Mammary epithelial cell (primary cell): ENCODE measurements at regions of chr3 and their contacts with region 1.

Region 1: DNA sequence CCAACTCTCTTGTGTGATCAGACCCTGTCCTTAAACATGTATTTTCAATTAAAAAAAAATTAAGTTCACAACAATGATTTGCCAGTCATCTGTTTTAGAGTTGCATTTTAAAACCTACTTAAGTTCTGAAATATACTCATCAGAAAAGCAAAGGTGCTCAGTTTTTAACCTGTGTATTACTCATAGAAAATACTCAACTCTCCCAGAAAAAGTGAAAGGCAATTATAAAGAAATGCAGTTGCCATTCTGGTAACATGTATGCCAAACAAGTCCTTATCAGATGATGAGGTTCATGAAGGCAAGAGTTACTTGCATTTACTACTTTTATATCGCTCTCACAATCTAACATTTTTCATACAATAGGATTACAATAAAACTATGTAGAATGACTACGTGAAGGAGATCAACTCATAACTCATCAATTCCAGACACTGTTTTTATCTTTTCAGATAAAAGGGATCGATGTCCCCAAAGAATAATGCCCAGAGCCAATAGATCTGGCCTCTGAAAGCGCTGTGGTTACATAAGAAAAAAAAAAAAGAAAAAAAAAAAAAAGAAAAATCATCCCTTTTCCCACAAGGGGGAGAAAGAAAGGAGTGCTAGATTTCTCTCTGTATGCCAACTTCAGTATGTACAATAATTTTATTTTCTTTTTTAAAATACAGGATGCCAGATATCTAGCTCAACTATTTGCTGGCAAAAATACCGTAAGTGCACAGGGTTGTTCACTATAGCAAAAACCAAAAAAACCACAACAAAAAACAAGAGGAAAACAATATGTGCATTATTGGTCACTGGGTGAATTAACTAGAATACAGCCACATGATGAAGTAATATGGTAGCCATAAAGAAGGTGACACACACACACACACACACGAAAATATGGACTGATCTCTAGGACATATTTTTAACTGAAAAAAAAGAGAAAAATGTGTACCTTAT is 137.4 kb downstream of the NR1I2 start:
- DNase-seq: no peak
- H3K4me3 ChIP-seq: no peak overlapping the region
- H3K27ac ChIP-seq: no peak overlapping the region
- H3K4me1 ChIP-seq: no peaks in the 10 kb centered on the region
- H3K27me3 ChIP-seq: no peaks in the 10 kb centered on the region
- CTCF ChIP-seq: peak in 1 of 2 donors; percentile 14

Region 2: DNA sequence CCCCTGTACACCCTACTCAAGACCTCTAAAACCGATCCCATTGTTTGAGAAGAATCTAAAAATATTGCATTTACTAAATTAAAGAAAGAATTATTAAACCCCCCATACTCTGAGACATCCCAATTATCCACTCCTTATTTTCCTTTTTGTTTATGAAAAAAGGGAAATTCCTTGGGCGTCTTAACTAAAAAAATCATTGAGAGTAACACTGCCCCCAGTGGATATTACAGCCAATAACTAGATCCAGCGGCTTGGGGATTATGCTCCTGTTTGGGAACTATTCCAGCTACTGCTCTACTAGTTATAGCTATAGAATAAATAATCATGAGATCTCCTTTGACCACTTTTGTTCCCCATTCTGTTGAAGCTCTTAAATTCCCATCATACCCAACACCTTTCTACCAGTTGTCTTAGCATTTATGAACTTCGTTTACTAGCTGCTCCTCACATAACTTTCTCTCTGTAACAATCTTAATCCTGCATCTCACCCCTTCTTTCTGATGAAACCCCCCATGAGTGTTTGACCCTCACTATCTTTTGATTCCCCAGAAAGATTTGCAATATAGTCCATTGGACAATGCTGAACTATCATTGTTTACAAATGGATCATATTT is 229.1 kb before region 1 on chr3:
- CTCF ChIA-PET with region 1: no interaction called
- dilution Hi-C with region 1: no loop called
- in situ Hi-C with region 1: no loop called
- intact Hi-C with region 1: no loop called
- DNase-seq: peak; percentile 15
- H3K4me3 ChIP-seq: no peak overlapping the region
- H3K27ac ChIP-seq: no peak overlapping the region
- H3K4me1 ChIP-seq: no peaks in the 10 kb centered on the region
- H3K27me3 ChIP-seq: peaks cover 3% of the 10 kb centered on the region
- CTCF ChIP-seq: peak; percentile 52 to 65

Region 3: DNA sequence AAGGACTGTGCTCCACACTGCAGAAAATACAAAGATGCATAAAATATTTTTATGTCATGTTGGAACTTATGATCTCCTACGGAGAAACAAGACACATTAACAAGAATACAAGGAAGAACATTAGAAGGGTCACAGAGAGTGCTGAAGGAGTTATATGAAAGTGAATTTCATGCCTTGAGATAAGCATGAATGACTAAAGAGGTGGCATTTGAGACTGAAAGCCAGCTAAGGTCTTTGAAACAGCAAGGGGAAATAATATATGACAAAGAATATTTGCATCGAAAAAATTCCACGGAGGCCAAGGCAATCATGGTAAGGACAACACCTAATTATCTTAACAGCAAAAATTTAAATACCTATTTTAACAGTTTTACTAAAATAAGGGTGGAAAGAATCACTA is 162.5 kb after region 1 on chr3:
- CTCF ChIA-PET with region 1: no interaction called
- dilution Hi-C with region 1: no loop called
- in situ Hi-C with region 1: loop called in 1 of 2 experiments (anchors 10 kb)
- intact Hi-C with region 1: no loop called
- DNase-seq: no peak
- H3K4me3 ChIP-seq: no peak overlapping the region
- H3K27ac ChIP-seq: no peak overlapping the region
- H3K4me1 ChIP-seq: peaks cover 6% of the 10 kb centered on the region
- H3K27me3 ChIP-seq: no peaks in the 10 kb centered on the region
- CTCF ChIP-seq: no peak